ENCODE measurements at regions of chr10 and their contacts with region 1.

Region 1: GRCh38 chr10:78047314-78047891 is 13.7 kb downstream of the RPS24 start:
- H3K4me3 ChIP-seq: no peak overlapping the region
- H3K27ac ChIP-seq: no peak overlapping the region
- H3K4me1 ChIP-seq: no peaks in the 10 kb centered on the region
- CTCF ChIP-seq: peak; percentile 92

Region 2: DNA sequence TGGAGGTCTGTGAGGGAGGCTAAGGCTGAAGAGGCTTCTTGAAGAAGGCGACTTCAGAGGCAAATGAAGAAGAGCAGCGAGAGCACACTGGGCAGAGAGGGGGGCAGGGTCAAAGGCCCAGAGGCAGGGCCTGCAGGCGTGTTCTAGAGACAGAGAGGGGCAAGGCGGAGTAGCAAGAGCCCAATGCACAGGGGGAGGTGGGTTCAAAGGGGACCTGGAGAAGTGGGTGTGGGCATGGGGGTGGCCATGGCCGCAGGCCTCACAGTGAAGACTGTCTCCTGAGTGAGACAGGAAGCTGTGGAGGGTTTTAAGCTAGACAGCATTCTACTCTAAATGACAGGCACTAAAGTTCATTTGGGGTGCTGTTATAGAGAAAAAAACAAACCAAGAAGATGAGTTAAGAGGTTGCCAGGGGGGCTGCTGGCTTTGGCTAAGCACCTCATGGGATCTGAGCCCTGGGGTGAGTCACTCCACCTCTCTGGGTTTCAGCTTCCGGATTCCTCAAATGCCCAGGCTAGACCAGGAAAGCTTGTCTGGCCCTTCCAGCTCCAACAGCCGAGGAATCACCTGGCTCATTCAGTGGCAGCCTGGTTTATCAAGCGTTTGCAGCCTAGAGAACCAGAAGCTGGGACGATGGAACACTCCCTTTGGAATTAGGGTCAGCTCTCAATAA is 202.5 kb before region 1 on chr10:
- CTCF ChIA-PET with region 1: no interaction called
- POLR2A ChIA-PET with region 1: no interaction called
- H3K4me3 ChIP-seq: no peak overlapping the region
- H3K27ac ChIP-seq: no peak overlapping the region
- H3K4me1 ChIP-seq: no peaks in the 10 kb centered on the region
- CTCF ChIP-seq: no peak

Region 3: DNA sequence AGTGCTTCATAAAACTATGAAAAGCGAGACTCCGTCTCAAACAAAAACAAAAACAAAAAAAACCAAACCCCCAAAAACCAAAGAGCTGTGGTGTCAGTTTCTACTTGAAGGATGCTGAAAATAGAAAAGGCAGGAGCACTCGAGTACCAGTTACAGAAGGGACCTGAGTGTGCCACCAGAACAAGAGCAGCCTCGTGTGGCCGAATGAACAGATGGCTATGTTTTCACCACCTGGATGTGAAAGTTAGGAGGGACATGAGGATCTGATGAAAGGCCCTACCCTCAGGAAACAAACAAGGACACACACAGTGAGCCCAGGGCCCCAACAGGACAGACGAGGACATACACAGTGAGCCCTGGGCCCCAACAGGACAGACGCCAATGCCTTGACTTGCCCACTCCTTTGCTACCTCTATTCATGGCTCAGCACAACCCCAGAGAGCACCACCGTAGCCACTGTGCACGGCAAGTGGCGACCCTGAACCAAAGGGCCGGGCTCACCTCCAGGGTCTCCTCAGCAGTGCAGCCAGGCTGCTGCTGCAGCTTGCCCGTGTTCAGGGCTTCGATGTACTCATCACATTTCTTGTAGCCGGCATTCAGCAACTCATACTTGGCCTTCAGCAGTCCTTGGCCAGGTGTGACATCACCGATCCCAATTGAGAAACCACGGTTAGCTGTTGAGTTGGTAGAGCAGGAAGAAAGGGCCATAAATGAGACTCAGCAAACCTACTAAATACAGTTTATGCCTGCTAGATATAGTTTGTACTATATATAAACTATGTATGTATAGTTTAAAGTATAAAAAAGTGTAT is 43.0 kb before region 1 on chr10:
- CTCF ChIA-PET with region 1: no interaction called
- POLR2A ChIA-PET with region 1: no interaction called
- H3K4me3 ChIP-seq: no peak overlapping the region
- H3K27ac ChIP-seq: no peak overlapping the region
- H3K4me1 ChIP-seq: 0 out of 2 replicates have a peak, but pooled peaks cover 3% of the 10 kb centered on the region
- CTCF ChIP-seq: no peak

Region 4: DNA sequence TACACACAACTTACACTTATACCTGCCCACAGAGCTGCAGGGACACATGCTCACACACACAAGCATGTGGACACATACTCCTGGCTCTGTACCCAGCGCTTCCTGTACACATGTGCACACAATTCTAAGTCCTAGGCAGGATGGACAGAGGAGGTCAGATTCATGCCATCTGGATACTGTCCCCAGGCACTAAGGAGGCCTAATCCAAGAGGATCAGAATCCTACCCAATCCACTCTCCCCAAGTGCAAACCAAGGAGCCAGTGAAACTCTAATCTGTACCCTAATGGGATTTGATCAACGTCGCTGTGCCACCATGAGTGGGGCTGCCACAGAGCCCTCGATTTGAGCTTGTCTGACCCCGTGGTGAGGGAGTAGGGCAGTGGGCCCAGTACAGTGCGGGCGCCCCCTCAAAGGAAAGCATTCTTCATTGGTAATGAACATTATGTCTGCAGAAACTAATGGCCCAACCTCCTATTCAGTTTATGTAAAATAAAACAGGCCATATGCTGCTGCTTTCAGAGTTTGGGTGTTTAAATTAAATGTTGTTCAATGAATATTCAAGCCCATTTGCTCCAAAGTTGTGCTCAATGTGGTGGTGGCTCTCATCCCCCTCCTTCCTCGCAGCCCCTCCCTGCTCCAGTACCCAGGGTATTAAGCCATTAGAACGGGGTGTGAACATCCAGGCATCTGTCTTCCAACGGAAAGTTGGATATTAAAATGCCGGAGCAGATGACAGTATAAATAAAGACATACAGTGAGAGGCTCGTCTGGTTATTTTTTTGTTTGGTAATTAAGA is 12.7 kb after region 1 on chr10:
- CTCF ChIA-PET with region 1: interaction called, 15 read pairs
- POLR2A ChIA-PET with region 1: no interaction called
- H3K4me3 ChIP-seq: no peak overlapping the region
- H3K27ac ChIP-seq: no peak overlapping the region
- H3K4me1 ChIP-seq: no peaks in the 10 kb centered on the region
- CTCF ChIP-seq: no peak

Region 5: DNA sequence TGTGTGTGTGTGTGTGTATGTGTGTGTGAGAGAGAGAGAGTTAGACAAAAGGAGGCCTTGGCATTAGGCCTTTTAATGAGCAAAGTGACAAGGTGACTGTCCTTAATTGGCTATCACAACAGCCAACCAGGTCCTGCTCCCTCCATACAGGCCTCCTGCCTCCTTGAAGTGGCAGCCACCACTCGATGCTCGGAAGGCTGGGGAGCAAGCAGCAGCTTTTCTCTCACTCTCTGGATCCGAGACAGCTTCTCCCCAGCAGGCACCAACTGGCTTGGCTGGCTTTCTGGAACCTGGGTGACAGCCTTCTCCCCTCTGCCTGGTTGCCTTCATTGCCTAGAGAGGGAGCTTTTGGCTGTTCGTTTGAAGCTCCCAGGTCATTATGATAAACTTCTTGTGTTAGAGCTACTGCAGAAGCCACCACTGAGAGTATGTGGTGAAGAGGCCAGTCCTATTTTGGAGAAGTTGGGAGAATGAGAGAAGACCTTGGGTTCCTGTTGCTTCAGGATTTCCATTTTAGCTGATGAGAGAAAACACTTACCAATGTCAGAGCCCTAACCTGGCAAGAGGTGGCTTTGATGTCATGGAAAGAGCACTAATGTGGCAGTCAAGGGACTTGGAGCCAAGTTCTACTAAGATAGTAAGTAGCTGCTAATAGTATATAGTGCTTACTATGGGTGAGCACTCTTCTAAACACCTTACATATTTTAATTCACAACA is 23.9 kb after region 1 on chr10:
- CTCF ChIA-PET with region 1: interaction called, 10 read pairs
- POLR2A ChIA-PET with region 1: no interaction called
- H3K4me3 ChIP-seq: no peak overlapping the region
- H3K27ac ChIP-seq: no peak overlapping the region
- H3K4me1 ChIP-seq: no peaks in the 10 kb centered on the region
- CTCF ChIP-seq: no peak

Region 6: DNA sequence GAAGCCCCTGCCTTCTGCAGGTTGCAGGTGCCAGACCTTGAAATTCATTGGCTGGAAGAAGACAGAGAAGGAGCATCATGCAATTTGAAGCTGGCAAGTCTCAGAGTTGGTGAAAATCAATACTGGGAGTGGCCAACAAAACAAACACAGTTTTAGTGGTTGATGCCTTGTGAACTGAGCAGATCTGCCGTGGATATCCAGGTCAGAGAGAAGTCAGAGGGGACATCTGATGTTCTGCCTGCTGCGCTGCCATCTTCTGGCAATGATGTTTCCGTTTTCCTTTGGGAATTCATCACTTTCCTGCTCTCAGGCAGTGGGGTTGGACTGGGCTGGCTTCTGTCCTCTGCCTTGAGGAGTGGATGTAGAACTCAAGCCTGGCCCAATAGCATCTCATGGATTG is 118.2 kb after region 1 on chr10:
- CTCF ChIA-PET with region 1: interaction called, 73 read pairs
- POLR2A ChIA-PET with region 1: no interaction called
- H3K4me3 ChIP-seq: no peak overlapping the region
- H3K27ac ChIP-seq: no peak overlapping the region
- H3K4me1 ChIP-seq: no peaks in the 10 kb centered on the region
- CTCF ChIP-seq: peak; percentile 28; the same call in 1 of the 2 replicates

Measured in HEK293 (cell line).